SK-N-SH (cell line): ENCODE measurements at regions of chr19 and their contacts with region 1.

Region 1: DNA sequence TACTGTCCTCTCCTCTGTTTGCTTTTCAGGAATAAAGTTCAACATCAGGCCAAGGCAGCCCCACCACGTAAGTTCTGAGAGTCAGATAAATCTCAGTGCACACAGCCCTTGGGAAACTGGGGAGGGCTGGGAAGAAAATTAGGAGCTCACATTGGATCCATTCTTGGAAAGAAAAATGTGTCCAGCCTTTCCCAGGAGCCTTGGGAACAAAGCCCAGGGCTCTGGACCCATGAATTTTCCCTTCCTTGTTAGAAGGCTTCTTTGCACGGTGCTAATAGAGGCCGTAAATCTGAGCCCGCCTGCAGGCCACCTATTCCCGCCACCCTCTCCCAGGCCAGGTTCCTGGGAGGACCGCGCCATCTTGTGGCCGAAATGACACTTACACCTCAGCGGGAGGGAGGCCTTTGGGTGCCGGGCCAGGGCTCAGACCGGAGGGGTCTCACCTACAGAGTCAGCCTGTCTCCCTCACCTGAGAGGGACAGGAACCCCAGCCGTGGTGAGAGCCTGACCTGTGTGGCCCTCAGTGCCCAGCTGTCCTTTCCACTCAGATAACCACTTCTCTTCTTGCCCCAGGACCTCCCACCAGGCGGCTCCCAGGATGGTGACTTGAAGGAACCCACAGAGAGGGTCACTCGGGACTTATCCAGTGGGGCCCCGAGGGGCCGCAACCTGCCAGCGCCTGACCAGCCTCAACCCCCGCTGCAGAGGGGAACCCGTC is 25.1 kb upstream of the KCTD15 start:
- DNase-seq: peak; percentile 92
- H3K4me3 ChIP-seq: no peak overlapping the region; a peak in 1 of 4 replicates
- H3K27ac ChIP-seq: no peak overlapping the region
- H3K4me1 ChIP-seq: peaks cover 0 to 32% of the 10 kb centered on the region in 2 experiments; a peak in 1 of 4 replicates
- H3K27me3 ChIP-seq: no peaks in the 10 kb centered on the region
- CTCF ChIP-seq: peak; percentile 79
- EP300 ChIP-seq: no peak
- RAD21 ChIP-seq: peak; percentile 98

Region 2: DNA sequence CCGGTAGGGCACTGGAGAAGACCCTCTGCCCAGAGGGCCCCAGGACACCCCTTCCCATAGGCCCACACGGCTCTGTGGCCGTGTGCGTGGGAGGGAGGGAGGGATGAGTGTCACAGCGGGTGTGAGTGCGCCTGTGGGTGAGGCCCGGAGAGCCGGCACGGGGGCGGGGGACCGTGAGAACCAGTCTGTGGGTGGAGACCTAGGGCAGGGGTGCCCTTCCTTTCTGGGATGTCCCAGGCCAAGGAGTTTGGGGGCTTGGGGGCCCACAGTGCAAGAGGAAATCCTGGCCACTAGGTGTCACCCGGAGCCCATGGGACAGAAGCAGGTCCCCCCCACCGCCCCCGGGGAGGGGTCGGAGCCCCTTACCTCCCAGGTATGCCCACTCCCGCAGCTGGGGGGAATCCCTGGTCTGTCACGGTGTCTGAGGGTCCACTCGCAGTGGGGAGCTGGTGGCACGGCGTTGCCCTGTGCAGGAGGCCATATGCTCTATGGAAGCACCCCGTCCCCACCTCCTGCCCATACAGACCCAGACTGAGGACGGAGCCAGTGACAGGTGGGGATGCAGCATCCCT is 529.9 kb before region 1 on chr19:
- CTCF ChIA-PET with region 1: interaction called, 41 read pairs
- POLR2A ChIA-PET with region 1: no interaction called
- DNase-seq: peak; percentile 72
- H3K4me3 ChIP-seq: no peak overlapping the region
- H3K27ac ChIP-seq: no peak overlapping the region
- H3K4me1 ChIP-seq: peaks cover 0 to 8% of the 10 kb centered on the region in 2 experiments; a peak in 1 of 4 replicates
- H3K27me3 ChIP-seq: no peaks in the 10 kb centered on the region
- CTCF ChIP-seq: peak; percentile 66
- EP300 ChIP-seq: no peak
- RAD21 ChIP-seq: peak; percentile 74

Region 3: GRCh38 chr19:33416307-33417215 is 355.0 kb before region 1 on chr19:
- CTCF ChIA-PET with region 1: interaction called, 155 read pairs
- POLR2A ChIA-PET with region 1: interaction called, 3 read pairs
- DNase-seq: peak; percentile 87
- H3K4me3 ChIP-seq: no peak overlapping the region; a peak in 1 of 4 replicates
- H3K27ac ChIP-seq: no peak overlapping the region
- H3K4me1 ChIP-seq: peaks cover 0 to 40% of the 10 kb centered on the region in 2 experiments; a peak in 1 of 4 replicates
- H3K27me3 ChIP-seq: no peaks in the 10 kb centered on the region
- CTCF ChIP-seq: peak; percentile 61
- EP300 ChIP-seq: no peak
- RAD21 ChIP-seq: peak; percentile 77

Region 4: DNA sequence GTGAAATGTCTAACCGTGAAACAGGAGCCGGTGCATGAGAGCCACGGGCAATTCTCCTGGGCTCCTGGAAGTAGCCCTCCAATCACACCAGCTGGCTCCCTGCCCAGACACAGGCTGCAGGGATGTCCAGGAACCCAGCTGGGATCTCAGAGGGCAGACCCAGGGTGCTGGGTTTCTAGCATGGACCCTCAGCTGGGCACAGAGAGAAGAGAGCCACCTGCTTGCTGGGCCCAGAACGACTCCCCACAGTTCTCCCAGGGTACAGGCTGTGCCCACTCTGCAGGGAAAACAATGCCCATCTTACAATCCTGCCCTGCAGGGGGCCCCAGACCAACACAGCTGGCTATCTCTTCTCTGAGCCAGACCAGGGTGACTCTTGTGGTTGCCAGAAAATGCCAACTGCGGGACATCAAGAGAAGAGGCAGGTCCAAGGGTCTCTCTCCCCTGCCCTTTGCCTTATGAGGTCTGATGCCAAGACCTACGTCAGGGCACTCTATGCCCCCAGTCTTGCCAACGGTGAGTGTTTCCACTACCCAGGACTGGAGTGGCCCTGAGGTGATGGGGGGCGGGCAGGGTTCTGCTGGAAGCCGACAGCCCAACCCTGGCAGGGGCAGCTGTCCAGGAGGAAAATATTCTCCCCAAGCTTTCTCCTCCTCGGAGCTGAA is 333.4 kb before region 1 on chr19:
- CTCF ChIA-PET with region 1: interaction called, 59 read pairs
- POLR2A ChIA-PET with region 1: no interaction called
- DNase-seq: peak; percentile 89
- H3K4me3 ChIP-seq: no peak overlapping the region
- H3K27ac ChIP-seq: peak overlapping the region; percentile 43 to 91; a peak in 3 of 4 replicates
- H3K4me1 ChIP-seq: peaks cover 17 to 60% of the 10 kb centered on the region in 2 experiments
- H3K27me3 ChIP-seq: no peaks in the 10 kb centered on the region
- CTCF ChIP-seq: peak; percentile 49
- EP300 ChIP-seq: peak in 1 of 2 experiments; percentile 77; a peak in 2 of 4 replicates
- RAD21 ChIP-seq: peak; percentile 61

Region 5: GRCh38 chr19:33684536-33685232 is 86.9 kb before region 1 on chr19:
- CTCF ChIA-PET with region 1: interaction called, 38 read pairs
- POLR2A ChIA-PET with region 1: no interaction called
- DNase-seq: peak; percentile 76
- H3K4me3 ChIP-seq: no peak overlapping the region
- H3K27ac ChIP-seq: peak overlapping the region in 1 of 2 experiments; percentile 4; a peak in 1 of 4 replicates
- H3K4me1 ChIP-seq: peaks cover 0 to 51% of the 10 kb centered on the region in 2 experiments; a peak in 2 of 4 replicates
- H3K27me3 ChIP-seq: no peaks in the 10 kb centered on the region
- CTCF ChIP-seq: no peak
- EP300 ChIP-seq: no peak
- RAD21 ChIP-seq: no peak

Region 6: DNA sequence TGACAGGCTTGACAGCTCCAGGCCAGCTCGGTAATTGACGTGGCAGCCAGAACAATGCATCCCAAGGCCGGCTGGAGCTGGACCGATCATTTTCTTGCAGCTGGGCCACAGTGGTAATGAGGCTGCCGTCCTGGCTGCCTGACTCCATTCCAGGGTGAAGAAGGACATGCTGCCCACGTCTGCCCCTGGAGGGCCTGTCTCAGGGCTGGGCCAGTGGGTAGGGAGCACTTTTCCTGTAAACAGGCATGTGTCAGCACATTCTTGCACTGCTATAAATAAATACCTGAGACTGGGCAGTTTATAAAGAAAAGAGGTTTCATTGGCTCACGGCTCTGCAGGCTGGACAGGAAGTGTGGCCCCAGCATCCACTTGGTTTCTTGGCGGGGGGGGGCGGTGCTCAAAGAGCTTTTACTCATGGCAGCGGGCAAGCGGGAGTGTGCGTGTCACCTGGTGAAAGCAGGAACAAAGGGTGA is 13.0 kb before region 1 on chr19:
- CTCF ChIA-PET with region 1: interaction called, 15 read pairs
- POLR2A ChIA-PET with region 1: no interaction called
- DNase-seq: no peak
- H3K4me3 ChIP-seq: no peak overlapping the region
- H3K27ac ChIP-seq: no peak overlapping the region
- H3K4me1 ChIP-seq: peaks cover 0 to 14% of the 10 kb centered on the region in 2 experiments; a peak in 1 of 4 replicates
- H3K27me3 ChIP-seq: no peaks in the 10 kb centered on the region
- CTCF ChIP-seq: no peak
- EP300 ChIP-seq: no peak
- RAD21 ChIP-seq: no peak

Region 7: DNA sequence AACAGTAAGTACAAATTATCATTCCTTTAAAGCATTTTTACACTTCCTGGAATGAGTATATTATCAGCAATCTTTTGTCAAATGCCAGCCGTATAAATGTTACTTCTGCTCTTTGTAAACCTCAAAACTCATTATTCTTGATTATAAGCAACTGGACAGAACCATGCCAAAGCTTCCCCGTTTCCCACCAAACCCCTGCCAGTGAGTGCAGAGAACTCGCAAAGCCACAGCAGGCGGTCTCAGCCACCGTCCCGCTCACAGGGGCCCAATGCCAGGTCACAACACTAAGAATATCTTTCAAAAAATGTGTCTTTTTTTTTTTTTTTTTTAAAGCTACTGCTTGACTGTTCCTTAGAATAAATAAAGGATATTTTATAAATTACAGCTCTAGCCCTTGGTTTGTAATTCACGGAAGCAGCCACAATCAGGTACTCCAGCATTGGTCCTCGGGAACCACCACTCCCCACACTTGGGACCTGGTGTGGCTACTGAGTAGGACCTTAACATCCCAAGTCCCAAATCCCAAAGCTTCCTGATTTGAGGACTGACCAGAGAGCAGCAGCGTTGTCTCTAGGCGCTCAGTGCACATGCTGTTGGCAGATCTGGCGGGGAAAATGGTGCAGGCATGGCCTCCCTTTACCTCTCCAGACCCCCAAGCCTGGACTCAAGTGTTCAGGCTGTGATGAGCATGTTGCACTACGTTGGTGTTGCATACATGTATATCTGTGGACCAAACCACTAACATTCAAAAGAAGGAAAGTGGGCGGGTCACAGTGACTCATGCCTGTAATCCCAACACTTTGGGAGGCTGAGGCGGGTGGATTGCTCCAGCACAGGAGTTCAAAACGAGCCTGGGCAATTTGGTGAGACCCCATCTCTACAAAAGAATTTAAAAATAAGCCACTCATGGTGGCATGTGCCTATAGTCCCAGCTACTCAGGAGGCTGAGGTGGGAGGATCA is 44.1 kb after region 1 on chr19:
- CTCF ChIA-PET with region 1: no interaction called
- POLR2A ChIA-PET with region 1: no interaction called
- DNase-seq: peak; percentile 55
- H3K4me3 ChIP-seq: no peak overlapping the region
- H3K27ac ChIP-seq: peak overlapping the region in 1 of 2 experiments; percentile 92; a peak in 2 of 4 replicates
- H3K4me1 ChIP-seq: peaks cover 0 to 42% of the 10 kb centered on the region in 2 experiments; a peak in 2 of 4 replicates
- H3K27me3 ChIP-seq: no peaks in the 10 kb centered on the region
- CTCF ChIP-seq: no peak
- EP300 ChIP-seq: peak in 1 of 2 experiments; percentile 34; a peak in 1 of 4 replicates
- RAD21 ChIP-seq: no peak

Region 8: DNA sequence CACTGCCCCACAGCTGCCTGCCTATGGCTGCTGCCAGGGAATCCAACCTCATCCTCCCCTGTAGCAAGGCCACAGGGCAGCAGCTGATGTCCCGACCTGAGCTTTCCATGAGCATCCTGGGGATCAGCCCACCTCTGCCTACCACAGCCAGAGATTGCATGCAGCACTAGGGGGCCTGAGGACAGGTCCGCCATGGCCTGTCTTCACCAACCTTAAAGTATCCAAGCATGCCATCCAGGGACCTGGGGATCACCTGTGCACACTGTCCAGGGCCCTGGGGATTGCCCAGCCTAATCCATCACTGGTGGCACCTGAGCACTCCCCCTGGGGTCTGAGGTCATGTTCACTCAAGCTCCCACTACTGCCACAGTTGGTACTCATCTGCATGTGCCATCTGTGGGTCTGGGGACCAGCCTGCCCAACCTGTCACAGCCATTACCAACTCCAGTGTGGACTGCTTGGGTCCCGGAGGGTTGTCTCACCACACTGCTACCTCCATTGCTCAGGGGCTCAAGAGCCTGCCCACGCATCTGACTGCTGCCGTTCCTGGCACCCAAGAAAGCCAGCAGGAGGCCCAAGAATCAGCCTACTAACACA is 78.1 kb after region 1 on chr19:
- CTCF ChIA-PET with region 1: no interaction called
- POLR2A ChIA-PET with region 1: no interaction called
- DNase-seq: no peak
- H3K4me3 ChIP-seq: no peak overlapping the region
- H3K27ac ChIP-seq: no peak overlapping the region
- H3K4me1 ChIP-seq: no peaks in the 10 kb centered on the region
- H3K27me3 ChIP-seq: no peaks in the 10 kb centered on the region
- CTCF ChIP-seq: no peak
- EP300 ChIP-seq: no peak
- RAD21 ChIP-seq: no peak